Prostate gland (tissue), 2 donors: ENCODE measurements at regions of chr20 and their contacts with region 1.

Region 1: GRCh38 chr20:63230800-63231268 is 4.9 kb upstream of the BIRC7 start:
- DNase-seq: peak; percentile 47
- H3K4me3 ChIP-seq: no peak overlapping the region
- H3K27ac ChIP-seq: no peak overlapping the region
- H3K4me1 ChIP-seq: no peaks in the 10 kb centered on the region
- H3K27me3 ChIP-seq: peaks cover 5% of the 10 kb centered on the region
- CTCF ChIP-seq: peak in 3 of 4 experiments; percentile 37 to 62 (median 53)
- POLR2A ChIP-seq: no peak

Region 2: GRCh38 chr20:63178889-63179686 is 51.7 kb before region 1 on chr20:
- intact Hi-C with region 1: loop called (anchors 2 kb)
- DNase-seq: no peak
- H3K4me3 ChIP-seq: peak overlapping the region in 1 of 2 donors; percentile 17
- H3K27ac ChIP-seq: no peak overlapping the region
- H3K4me1 ChIP-seq: peaks cover 8% of the 10 kb centered on the region
- H3K27me3 ChIP-seq: peaks cover 71% of the 10 kb centered on the region
- CTCF ChIP-seq: peak; percentile 10 to 47 (median 41)
- POLR2A ChIP-seq: no peak

Region 3: DNA sequence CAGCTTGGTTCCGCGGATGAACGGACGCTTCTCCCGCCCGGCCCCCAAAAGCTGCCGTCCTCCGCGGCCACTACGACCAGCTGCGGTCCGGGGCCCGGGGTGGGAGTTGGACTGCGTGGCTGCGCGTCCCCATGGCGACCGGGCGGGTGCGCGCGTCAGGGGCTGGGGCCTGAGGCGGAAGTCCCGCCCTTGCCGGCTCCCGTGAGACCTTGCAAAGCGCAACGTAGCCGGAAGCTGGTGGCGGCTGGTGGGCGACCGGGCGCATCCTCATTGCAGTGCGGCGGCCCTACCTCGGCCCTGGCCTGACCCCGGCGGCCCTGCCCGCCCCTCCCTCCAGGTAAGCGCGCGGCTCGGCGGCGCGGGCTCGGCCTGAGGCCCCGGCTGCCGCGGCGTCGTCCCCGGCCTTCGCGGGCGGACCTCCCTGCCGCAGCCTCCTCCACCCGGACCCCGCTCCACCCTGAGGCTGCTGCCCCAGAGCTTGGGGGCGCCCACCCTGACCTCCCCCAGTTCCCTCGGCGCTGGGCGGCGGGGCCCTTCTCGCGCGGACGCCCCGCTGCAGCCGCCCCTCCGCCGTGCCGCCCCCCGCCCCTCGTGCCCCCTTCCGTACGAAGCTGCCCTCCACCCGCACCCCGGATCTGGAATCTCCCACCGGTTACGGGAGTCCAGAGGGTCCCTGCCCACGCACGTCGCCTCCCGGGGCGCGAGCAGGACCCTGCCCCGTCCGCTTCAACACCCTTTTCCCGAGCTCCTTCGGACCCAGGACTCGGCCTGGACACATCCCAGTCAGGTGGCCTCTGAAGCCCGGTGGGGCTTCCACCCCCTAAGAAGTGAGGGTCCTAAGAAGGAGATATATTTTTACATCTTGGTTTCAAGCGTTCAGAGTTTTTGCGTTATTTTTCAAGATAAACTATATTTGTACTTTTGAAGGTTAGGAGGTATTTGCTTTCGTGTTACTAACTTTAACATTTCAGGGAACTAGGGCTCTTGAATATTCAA is 42.0 kb after region 1 on chr20 and contains the start of gene ARFGAP1:
- intact Hi-C with region 1: no loop called
- DNase-seq: peak; percentile 88
- H3K4me3 ChIP-seq: peak within 1 kb of the TSS; percentile 90 to 100
- H3K27ac ChIP-seq: peak within 1 kb of the TSS; percentile 75 to 80
- H3K4me1 ChIP-seq: no peaks in the 10 kb centered on the region
- H3K27me3 ChIP-seq: no peaks in the 10 kb centered on the region
- CTCF ChIP-seq: no peak
- POLR2A ChIP-seq: peak; percentile 66
- total RNA-seq, gene ARFGAP1: 43.6 to 85.6 TPM

Region 4: GRCh38 chr20:63698739-63699465 is 468.1 kb after region 1 on chr20:
- intact Hi-C with region 1: no loop called
- DNase-seq: no peak
- H3K4me3 ChIP-seq: no peak overlapping the region
- H3K27ac ChIP-seq: no peak overlapping the region
- H3K4me1 ChIP-seq: peaks cover 7% of the 10 kb centered on the region
- H3K27me3 ChIP-seq: no peaks in the 10 kb centered on the region
- CTCF ChIP-seq: no peak
- POLR2A ChIP-seq: no peak